H1 (cell line): ENCODE measurements at regions of chr11 and their contacts with region 1.

Region 1: DNA sequence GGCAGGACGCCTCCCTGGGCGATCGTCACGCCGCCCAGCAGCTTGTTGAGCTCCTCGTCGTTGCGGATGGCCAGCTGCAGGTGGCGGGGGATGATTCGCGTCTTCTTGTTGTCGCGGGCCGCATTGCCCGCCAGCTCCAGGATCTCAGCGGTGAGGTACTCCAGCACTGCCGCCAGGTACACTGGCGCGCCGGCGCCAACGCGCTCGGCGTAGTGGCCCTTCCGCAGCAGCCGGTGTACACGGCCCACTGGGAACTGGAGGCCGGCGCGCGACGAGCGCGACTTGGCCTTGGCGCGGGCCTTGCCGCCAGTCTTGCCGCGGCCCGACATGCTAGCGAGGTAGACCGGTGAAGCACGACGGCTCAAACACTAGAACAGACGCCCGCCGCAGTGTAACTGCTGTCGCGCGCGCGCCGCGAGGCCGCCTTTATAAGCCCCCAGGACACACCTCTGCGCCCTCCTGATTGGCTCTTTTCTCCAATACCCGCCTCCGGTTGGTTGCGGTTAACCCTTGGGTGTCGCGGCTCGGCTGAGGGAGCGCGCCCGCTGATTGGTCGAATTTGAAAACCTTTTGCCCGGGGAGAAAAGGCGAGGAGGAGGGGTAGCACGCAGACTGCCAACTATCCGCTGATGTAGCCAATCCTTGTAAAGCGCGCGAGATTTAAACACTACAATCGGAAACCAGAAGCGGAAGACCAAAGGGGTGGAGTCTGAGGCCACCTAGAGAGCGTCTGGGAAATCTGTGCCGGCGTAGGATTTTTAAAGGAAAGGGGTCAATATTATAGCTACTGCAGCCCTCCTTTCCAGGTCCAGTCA is 6.4 kb downstream of the DPAGT1 start:
- DNase-seq: peak; percentile 99 to 100
- H3K4me3 ChIP-seq: peak overlapping the region; percentile 85 to 97 (median 92)
- H3K27ac ChIP-seq: peak overlapping the region; percentile 93
- H3K4me1 ChIP-seq: peaks cover 0 to 16% (median 3%) of the 10 kb centered on the region in 4 experiments; a peak in 5 of 7 replicates
- H3K27me3 ChIP-seq: no peaks in the 10 kb centered on the region
- CTCF ChIP-seq: no peak; a peak in 1 of 4 replicates
- EP300 ChIP-seq: no peak
- POLR2A ChIP-seq: peak; percentile 100
- RAD21 ChIP-seq: no peak

Region 2: DNA sequence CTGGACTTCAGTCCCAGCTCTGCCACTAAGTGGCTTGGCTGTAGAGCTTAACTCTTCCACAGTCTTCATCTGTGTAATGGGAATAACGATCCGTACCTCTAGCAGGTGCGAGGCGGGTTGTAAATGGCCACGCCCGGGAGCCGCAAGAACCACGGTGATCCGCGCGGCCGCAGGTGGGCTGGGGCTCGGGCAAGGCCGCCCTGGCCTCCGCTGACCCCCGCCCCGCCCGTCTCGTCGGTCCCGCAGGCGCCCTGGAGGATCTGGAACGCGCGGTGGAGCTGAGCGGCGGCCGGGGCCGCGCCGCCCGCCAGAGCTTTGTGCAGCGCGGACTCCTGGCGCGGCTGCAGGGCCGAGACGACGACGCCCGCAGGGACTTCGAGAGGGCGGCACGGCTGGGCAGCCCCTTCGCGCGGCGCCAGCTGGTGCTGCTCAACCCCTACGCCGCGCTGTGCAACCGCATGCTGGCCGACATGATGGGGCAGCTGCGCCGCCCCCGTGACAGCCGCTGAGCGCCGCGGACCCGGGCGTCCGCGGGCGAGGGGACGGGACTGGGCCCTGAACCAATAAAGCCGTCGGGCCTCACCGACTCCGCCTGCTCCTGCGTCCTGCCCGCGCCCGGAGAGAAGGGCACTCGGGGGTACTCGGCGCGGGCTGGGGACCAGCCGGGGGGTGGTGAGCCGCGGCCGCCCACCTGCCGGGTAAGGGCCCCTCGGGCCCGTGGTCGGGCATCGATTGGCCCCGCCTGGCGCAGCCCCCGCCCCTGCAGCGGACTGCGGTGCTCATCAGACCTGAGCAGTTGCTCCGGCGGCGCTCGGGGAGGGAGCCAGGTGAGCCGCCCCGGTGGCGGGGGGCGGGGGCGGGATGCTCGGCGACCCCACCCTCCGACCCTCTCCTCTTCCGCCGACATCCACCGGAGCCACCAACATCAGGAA is 564.6 kb before region 1 on chr11 and contains the start of gene TMEM25:
- CTCF ChIA-PET with region 1: no interaction called
- POLR2A ChIA-PET with region 1: no interaction called
- DNase-seq: peak in 1 of 2 experiments; percentile 90
- H3K4me3 ChIP-seq: peak within 1 kb of the TSS; percentile 83 to 95 (median 94)
- H3K27ac ChIP-seq: no peak within 1 kb of the TSS; the same call in 1 of the 2 replicates
- H3K4me1 ChIP-seq: peaks cover 0 to 14% (median 8%) of the 10 kb centered on the region in 4 experiments; a peak in 5 of 7 replicates
- H3K27me3 ChIP-seq: no peaks in the 10 kb centered on the region; a peak in 2 of 7 replicates
- CTCF ChIP-seq: no peak
- EP300 ChIP-seq: no peak
- POLR2A ChIP-seq: no peak; a peak in 2 of 3 replicates
- RAD21 ChIP-seq: no peak
- total RNA-seq, gene TMEM25: 13.7 and 18.3 TPM in 2 replicates

Region 3: DNA sequence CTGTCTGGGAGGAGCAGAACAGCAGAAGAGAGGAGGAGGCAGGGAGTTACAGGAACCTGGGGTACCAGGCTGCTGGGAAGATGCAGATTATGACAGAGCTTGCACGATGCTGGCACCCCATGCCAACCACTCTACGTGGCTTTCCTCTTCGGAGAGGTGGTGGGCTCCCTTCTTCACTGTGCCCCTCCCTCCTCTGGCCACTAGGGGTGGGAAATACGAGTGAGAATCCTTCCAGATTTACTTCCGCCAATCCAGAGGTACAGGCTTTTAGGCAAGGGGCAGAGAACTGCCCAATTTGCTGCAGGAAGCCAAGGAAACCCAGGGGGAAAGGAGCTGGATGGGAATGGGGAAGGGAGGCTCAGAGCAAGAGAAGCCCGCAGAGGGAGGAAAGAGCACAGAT is 50.6 kb before region 1 on chr11:
- CTCF ChIA-PET with region 1: interaction called, 3 read pairs
- POLR2A ChIA-PET with region 1: interaction called, 21 read pairs
- DNase-seq: no peak
- H3K4me3 ChIP-seq: no peak overlapping the region
- H3K27ac ChIP-seq: no peak overlapping the region
- H3K4me1 ChIP-seq: peaks cover 0 to 3% (median 1%) of the 10 kb centered on the region in 4 experiments; a peak in 3 of 7 replicates
- H3K27me3 ChIP-seq: no peaks in the 10 kb centered on the region
- CTCF ChIP-seq: peak; percentile 38 to 63 (median 38)
- EP300 ChIP-seq: no peak
- POLR2A ChIP-seq: no peak
- RAD21 ChIP-seq: no peak

Region 4: DNA sequence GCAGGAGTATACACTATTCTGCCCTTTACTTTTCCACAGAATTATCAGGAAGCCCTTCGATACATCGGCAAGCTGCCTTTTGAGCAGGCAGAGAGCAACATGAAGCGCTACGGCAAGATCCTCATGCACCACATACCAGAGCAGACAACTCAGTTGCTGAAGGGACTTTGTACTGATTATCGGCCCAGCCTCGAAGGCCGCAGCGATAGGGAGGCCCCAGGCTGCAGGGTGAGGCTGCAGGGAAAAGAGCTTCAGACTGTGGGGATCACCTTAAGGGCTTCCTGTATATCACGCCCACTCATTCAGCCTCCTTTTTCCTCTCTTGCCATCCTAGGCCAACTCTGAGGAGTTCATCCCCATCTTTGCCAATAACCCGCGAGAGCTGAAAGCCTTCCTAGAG is 17.4 kb before region 1 on chr11:
- CTCF ChIA-PET with region 1: interaction called, 3 read pairs
- POLR2A ChIA-PET with region 1: interaction called, 141 read pairs
- DNase-seq: no peak
- H3K4me3 ChIP-seq: no peak overlapping the region
- H3K27ac ChIP-seq: no peak overlapping the region
- H3K4me1 ChIP-seq: no peaks in the 10 kb centered on the region
- H3K27me3 ChIP-seq: no peaks in the 10 kb centered on the region
- CTCF ChIP-seq: no peak
- EP300 ChIP-seq: no peak
- POLR2A ChIP-seq: no peak
- RAD21 ChIP-seq: no peak

Region 5: DNA sequence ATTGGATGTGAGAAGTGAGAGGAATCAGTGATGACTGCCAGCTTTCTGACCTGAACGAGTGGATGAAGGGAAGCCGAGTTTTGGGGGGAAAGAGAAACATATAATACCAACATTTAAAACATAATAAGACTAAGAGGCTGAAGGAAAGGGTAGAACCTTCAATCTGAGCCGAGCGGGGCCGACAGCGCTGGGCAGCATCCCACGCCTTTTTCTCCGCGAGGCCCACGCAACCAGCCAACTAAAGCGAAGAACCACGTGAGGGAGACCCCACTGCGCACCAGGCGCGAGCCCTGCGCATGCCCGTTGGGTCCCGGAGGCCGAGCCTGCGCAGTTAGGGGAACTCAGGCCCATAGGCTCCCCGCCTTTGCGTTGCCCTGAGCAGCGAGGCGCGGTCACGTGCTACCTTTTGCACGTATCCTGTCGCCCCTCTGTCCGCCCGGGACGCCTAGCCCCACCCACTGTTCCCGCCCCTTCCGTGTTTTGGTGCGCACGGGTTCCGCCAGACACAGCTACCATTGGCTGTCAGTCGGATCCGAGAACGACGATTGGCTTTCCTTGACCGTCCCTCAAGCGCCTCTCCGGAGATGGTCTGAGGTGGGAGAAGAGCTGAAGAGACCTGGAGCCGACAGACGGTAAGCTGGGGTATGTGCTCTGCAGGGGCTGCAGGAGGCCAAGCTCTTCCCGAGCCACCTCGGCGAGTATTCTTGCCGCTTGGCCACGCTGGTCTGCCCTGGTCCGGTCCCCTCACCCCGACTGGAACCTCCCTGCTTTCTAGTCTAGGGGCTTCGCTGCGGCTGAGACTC is 25.9 kb after region 1 on chr11 and contains the start of gene HINFP:
- CTCF ChIA-PET with region 1: interaction called, 6 read pairs
- POLR2A ChIA-PET with region 1: interaction called, 19 read pairs
- DNase-seq: peak; percentile 98
- H3K4me3 ChIP-seq: peak within 1 kb of the TSS; percentile 63 to 97 (median 93)
- H3K27ac ChIP-seq: peak within 1 kb of the TSS; percentile 68
- H3K4me1 ChIP-seq: peaks cover 2 to 10% (median 6%) of the 10 kb centered on the region in 4 experiments; a peak in 6 of 7 replicates
- H3K27me3 ChIP-seq: no peaks in the 10 kb centered on the region
- CTCF ChIP-seq: no peak
- EP300 ChIP-seq: no peak
- POLR2A ChIP-seq: peak; percentile 33 to 87
- RAD21 ChIP-seq: no peak
- total RNA-seq, gene HINFP: 35.0 and 36.6 TPM in 2 replicates

Region 6: DNA sequence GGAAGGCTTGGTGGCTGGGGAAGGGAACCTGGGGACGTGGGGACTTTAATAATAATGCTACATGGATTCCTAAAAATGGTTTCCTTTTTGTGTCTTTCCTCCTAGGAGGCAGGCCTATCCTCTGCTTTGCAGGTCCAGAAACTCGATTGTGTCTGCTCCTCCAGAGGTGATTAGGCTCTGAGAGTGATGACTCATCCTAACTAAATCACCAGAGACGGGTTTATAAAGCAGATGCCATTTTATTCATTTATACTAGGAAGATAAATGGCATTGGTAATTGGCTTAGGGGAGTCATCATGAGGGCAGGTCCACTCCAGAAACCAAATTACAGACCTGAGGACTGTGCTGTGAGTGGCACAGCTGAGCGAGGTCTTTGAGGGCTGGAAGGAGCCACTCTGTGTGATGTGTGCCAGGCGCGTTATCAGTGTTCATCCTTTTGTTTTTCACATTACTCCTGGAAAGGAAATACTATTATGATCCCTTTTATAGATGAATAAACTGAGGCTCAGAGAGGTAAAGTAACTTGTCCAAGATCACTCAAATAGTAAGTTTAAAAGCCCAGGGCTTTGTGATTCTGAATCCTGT is 80.3 kb after region 1 on chr11:
- CTCF ChIA-PET with region 1: no interaction called
- POLR2A ChIA-PET with region 1: interaction called, 14 read pairs
- DNase-seq: no peak
- H3K4me3 ChIP-seq: no peak overlapping the region
- H3K27ac ChIP-seq: no peak overlapping the region
- H3K4me1 ChIP-seq: no peaks in the 10 kb centered on the region; a peak in 1 of 7 replicates
- H3K27me3 ChIP-seq: no peaks in the 10 kb centered on the region
- CTCF ChIP-seq: no peak
- EP300 ChIP-seq: no peak
- POLR2A ChIP-seq: no peak
- RAD21 ChIP-seq: no peak

Region 7: DNA sequence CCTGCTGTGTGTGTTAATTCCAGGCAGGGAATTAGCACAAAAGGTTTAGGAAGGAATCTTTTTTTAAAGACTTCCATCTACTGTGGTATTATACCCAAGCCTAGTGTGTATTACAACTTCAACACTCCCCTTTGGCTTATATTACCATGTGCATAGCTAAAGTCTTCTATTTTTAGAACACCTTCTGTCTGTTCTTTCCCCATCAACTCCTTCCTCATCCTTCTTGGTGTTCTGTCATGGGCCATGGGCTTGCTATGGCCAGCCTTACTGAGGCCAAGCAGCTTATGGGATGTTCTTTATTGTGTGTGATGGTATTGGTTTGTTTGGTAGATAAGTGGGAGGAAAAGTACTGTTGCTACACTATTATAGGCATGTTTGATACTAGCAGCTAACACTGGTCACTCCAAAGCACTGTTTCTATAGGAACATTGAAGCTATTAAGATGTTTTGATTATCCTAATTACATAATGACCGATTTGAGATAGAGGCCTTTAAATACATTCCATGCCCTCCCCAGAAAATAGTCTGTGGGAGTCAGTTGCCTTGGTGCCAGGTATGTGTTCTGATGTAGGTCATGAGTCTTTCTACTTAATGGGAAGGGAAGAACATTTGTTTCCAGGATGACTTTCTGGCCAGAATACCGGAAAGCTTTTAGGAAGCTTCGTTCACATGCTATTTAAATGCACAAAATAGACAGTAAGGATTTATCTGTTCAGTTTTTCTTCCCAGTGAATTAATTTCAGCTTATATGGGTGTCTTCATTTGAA is 205.1 kb after region 1 on chr11:
- CTCF ChIA-PET with region 1: no interaction called
- POLR2A ChIA-PET with region 1: no interaction called
- DNase-seq: no peak
- H3K4me3 ChIP-seq: no peak overlapping the region
- H3K27ac ChIP-seq: no peak overlapping the region
- H3K4me1 ChIP-seq: no peaks in the 10 kb centered on the region
- H3K27me3 ChIP-seq: no peaks in the 10 kb centered on the region
- CTCF ChIP-seq: no peak
- EP300 ChIP-seq: no peak
- POLR2A ChIP-seq: no peak
- RAD21 ChIP-seq: no peak